Activated T-helper 1 cell treated with anti-CD3 and anti-CD28 coated beads, Interleukin-12 subunit alpha, Interleukin-12 subunit beta, Interleukin-2, Interleukin-4 antibody, amounts not matched to agents 30 ng/mL and 10 ng/mL and 1 ng/mL, durations not matched to agents 14 hours and 24 hours and 36 hours (primary cell): ENCODE measurements at regions of chr11 and their contacts with region 1.

Region 1: GRCh38 chr11:74388678-74389327 is 9.4 kb downstream of the PGM2L1 start:
- DNase-seq: peak; percentile 33
- H3K4me3 Mint-ChIP-seq: no peak overlapping the region
- H3K27ac Mint-ChIP-seq: peak overlapping the region; percentile 19
- H3K4me1 Mint-ChIP-seq: peaks cover 28% of the 10 kb centered on the region
- H3K27me3 Mint-ChIP-seq: no peaks in the 10 kb centered on the region

Region 2: DNA sequence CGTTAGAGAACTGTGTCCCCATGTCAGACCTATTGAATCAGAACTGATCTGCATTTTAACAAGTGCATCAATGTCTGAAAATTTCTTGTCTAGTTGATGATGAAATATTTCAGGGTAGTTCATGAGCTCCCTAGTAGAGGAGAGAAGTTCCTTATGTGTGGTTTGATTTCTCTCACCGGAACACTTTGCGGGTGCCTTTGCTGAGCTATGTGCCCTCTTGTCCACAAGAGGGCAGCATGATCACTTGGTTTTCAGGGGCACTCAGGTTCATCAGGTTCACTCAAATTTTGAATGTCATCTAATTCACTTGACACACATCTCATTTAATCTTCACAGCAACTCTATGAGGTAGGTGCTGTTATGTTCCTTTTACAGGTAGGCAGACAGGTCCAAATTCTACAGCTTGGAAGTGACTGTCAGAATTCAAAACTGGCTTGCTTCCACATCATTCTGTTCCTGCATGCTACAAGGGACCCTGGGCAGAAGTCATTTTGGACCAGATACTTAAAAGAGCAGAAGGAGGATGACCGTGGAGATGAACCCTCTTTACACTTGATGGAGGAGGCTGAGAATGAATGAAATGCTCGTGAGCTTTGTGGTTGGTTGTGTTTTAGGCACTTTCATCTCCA is 132.9 kb before region 1 on chr11:
- intact Hi-C with region 1: loop called (anchors 5 kb)
- DNase-seq: peak; percentile 35
- H3K4me3 Mint-ChIP-seq: no peak overlapping the region
- H3K27ac Mint-ChIP-seq: no peak overlapping the region
- H3K4me1 Mint-ChIP-seq: peaks cover 5% of the 10 kb centered on the region
- H3K27me3 Mint-ChIP-seq: peaks cover 2% of the 10 kb centered on the region

Region 3: GRCh38 chr11:74418509-74418895 is 29.7 kb after region 1 on chr11:
- intact Hi-C with region 1: loop called (anchors 1 kb)
- DNase-seq: no peak
- H3K4me3 Mint-ChIP-seq: no peak overlapping the region
- H3K27ac Mint-ChIP-seq: peak overlapping the region; percentile 74
- H3K4me1 Mint-ChIP-seq: peaks cover 17% of the 10 kb centered on the region
- H3K27me3 Mint-ChIP-seq: peaks cover 2% of the 10 kb centered on the region

Region 4: GRCh38 chr11:74429205-74429604 is 40.4 kb after region 1 on chr11:
- intact Hi-C with region 1: no loop called
- DNase-seq: no peak
- H3K4me3 Mint-ChIP-seq: no peak overlapping the region
- H3K27ac Mint-ChIP-seq: no peak overlapping the region
- H3K4me1 Mint-ChIP-seq: no peaks in the 10 kb centered on the region
- H3K27me3 Mint-ChIP-seq: peaks cover 2% of the 10 kb centered on the region

Region 5: GRCh38 chr11:74570266-74571061 is 181.7 kb after region 1 on chr11:
- intact Hi-C with region 1: loop called (anchors 1 kb)
- DNase-seq: no peak
- H3K4me3 Mint-ChIP-seq: no peak overlapping the region
- H3K27ac Mint-ChIP-seq: no peak overlapping the region
- H3K4me1 Mint-ChIP-seq: no peaks in the 10 kb centered on the region
- H3K27me3 Mint-ChIP-seq: peaks cover 2% of the 10 kb centered on the region